ENCODE measurements at regions of chr13 and their contacts with region 1.

Region 1: GRCh38 chr13:66765559-66765958 is 464.6 kb downstream of the PCDH9 start:
- DNase-seq: no peak
- H3K4me3 ChIP-seq: no peak overlapping the region
- H3K4me3 Mint-ChIP-seq: no peak overlapping the region
- H3K27ac ChIP-seq: no peak overlapping the region
- H3K27ac Mint-ChIP-seq: no peak overlapping the region
- H3K4me1 ChIP-seq: no peaks in the 10 kb centered on the region
- H3K4me1 Mint-ChIP-seq: no peaks in the 10 kb centered on the region
- H3K27me3 ChIP-seq: no peaks in the 10 kb centered on the region
- H3K27me3 Mint-ChIP-seq: no peaks in the 10 kb centered on the region
- CTCF ChIP-seq: no peak

Region 2: GRCh38 chr13:66700059-66700690 is 65.4 kb before region 1 on chr13:
- intact Hi-C with region 1: no loop called
- DNase-seq: no peak
- H3K4me3 ChIP-seq: no peak overlapping the region
- H3K4me3 Mint-ChIP-seq: no peak overlapping the region
- H3K27ac ChIP-seq: no peak overlapping the region
- H3K27ac Mint-ChIP-seq: no peak overlapping the region
- H3K4me1 ChIP-seq: no peaks in the 10 kb centered on the region
- H3K4me1 Mint-ChIP-seq: no peaks in the 10 kb centered on the region
- H3K27me3 ChIP-seq: no peaks in the 10 kb centered on the region
- H3K27me3 Mint-ChIP-seq: peaks cover 0 to 2% (median 2%) of the 10 kb centered on the region in 3 donors
- CTCF ChIP-seq: no peak

Region 3: DNA sequence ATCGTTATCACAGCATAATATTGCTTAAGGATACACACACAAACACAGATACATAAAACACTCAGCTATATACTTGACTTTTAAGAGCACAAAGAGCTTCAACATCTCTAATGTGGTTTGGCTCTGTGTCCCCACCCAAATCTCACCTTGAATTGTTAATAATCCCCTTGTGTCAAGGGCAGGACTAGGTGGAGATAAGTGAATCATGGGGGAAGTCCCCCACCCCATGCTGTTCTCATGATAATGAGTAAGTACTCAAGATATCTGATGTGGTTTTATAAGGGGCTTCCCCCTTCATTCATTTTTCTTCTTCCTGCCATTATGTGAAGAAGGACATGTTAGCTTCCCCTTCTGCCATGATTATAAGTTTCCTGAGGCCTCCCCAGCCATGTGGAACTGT is 16.8 kb before region 1 on chr13:
- intact Hi-C with region 1: loop called in 1 of 2 experiments (anchors 2 kb)
- DNase-seq: no peak
- H3K4me3 ChIP-seq: no peak overlapping the region
- H3K4me3 Mint-ChIP-seq: no peak overlapping the region
- H3K27ac ChIP-seq: no peak overlapping the region
- H3K27ac Mint-ChIP-seq: no peak overlapping the region
- H3K4me1 ChIP-seq: no peaks in the 10 kb centered on the region
- H3K4me1 Mint-ChIP-seq: no peaks in the 10 kb centered on the region
- H3K27me3 ChIP-seq: no peaks in the 10 kb centered on the region
- H3K27me3 Mint-ChIP-seq: no peaks in the 10 kb centered on the region
- CTCF ChIP-seq: no peak